ENCODE measurements at regions of chr11 and their contacts with region 1.

Region 1: DNA sequence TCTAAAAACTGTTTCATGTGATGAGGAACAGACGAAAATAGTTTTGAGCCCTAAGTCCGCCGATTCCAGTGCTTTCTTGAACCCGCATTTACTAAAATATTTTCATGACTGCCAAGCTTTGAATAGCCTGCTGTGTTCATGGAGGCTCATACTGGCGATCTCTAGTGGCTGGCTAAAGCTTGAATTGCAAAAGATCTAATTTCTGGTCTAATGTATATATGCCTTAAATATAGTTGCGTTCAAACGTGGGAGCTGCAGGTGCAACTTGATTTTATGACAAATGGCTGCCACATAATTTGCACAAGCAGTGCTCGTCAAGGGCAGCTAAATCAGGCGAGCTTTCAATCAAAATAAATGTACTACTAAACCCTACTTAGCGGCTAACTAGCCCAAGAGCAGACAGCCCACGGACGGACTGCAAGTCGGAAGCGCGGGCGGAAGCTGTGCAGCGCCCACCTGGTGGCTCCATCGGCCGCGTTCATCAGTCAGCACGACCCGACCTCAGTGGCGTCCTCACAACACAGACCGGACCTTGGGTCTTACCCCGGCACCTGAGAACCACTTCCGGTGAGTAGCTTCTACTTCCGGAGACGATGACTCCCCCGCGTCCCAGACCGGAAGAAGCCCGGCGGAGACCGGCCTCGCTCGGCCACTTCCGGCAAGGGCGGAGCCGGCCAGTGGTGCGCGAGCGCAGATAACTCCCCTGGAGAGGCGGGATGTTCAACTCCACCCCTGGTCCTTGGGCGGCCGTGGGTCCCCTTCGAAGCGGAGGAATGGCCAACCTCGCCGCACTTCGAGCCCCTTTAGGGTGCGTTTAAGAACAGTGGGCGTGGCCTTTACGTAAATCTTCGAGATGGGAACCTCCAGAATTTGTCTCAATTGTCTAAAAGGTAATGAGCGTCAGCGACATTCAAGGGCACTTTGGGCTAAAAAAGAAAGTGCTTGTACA is 6.1 kb downstream of the RPL27A start:
- DNase-seq: peak; percentile 96 to 98
- ATAC-seq: peak; percentile 91 to 92
- H3K4me3 ChIP-seq: peak overlapping the region; percentile 59
- H3K27ac ChIP-seq: peak overlapping the region; percentile 85 to 88
- H3K4me1 ChIP-seq: peaks cover 49% of the 10 kb centered on the region
- CTCF ChIP-seq: 0 out of 3 replicates have a peak, but pooled peaks have one; percentile 23
- EP300 ChIP-seq: no peak
- POLR2A ChIP-seq: peak; percentile 83
- RAD21 ChIP-seq: peak; percentile 44 to 70

Region 2: GRCh38 chr11:8699903-8700302 is 11.2 kb after region 1 on chr11:
- CTCF ChIA-PET with region 1: no interaction called
- POLR2A ChIA-PET with region 1: interaction called, 15 read pairs
- DNase-seq: no peak
- ATAC-seq: no peak
- H3K4me3 ChIP-seq: no peak overlapping the region
- H3K27ac ChIP-seq: peak overlapping the region in 1 of 2 experiments; percentile 24; a peak in 1 of 6 replicates
- H3K4me1 ChIP-seq: peaks cover 16% of the 10 kb centered on the region
- CTCF ChIP-seq: no peak
- EP300 ChIP-seq: no peak
- POLR2A ChIP-seq: no peak
- RAD21 ChIP-seq: no peak

Region 3: GRCh38 chr11:8717876-8718753 is 29.4 kb after region 1 on chr11:
- CTCF ChIA-PET with region 1: interaction called, 3 read pairs
- POLR2A ChIA-PET with region 1: interaction called, 13 read pairs
- DNase-seq: peak in 1 of 2 experiments; percentile 56
- ATAC-seq: peak; percentile 12 to 51; a peak in 3 of 6 replicates
- H3K4me3 ChIP-seq: 0 out of 3 replicates have a peak overlapping the region, but pooled peaks have one; percentile 3
- H3K27ac ChIP-seq: peak overlapping the region; percentile 80 to 92
- H3K4me1 ChIP-seq: peaks cover 57% of the 10 kb centered on the region
- CTCF ChIP-seq: no peak
- EP300 ChIP-seq: peak in 1 of 2 experiments; percentile 30; a peak in 2 of 5 replicates
- POLR2A ChIP-seq: no peak
- RAD21 ChIP-seq: peak in 1 of 2 experiments; percentile 23; a peak in 1 of 5 replicates

Region 4: GRCh38 chr11:8768625-8769333 is 80.1 kb after region 1 on chr11:
- CTCF ChIA-PET with region 1: interaction called, 3 read pairs
- POLR2A ChIA-PET with region 1: interaction called, 13 read pairs
- DNase-seq: peak in 1 of 2 experiments; percentile 44
- ATAC-seq: peak; percentile 58 to 65
- H3K4me3 ChIP-seq: no peak overlapping the region
- H3K27ac ChIP-seq: peak overlapping the region; percentile 2 to 53; a peak in 3 of 6 replicates
- H3K4me1 ChIP-seq: peaks cover 24% of the 10 kb centered on the region
- CTCF ChIP-seq: peak; percentile 24; the same call in 1 of the 3 replicates
- EP300 ChIP-seq: no peak
- POLR2A ChIP-seq: no peak
- RAD21 ChIP-seq: peak; percentile 42 to 44; a peak in 4 of 5 replicates

Region 5: DNA sequence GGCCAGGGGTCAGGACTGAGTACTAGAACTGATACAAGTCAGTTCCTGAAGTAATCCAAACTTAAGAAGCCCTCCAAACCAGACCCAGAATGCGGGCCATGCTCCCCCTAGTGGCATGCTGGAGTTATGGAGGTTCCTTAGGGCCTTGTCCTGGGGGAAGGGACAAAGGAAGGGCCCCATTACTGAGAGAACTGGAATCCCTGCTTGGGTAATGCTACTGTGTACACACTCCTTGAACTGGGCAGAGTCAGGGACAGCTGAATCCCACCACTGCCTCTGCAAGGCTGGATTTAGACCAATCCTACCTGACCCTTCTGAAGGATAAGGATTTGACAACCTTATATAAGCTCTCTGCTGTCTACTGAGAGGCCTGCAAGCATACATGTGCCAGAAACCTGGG is 125.0 kb after region 1 on chr11:
- CTCF ChIA-PET with region 1: interaction called, 5 read pairs
- POLR2A ChIA-PET with region 1: interaction called, 16 read pairs
- DNase-seq: peak; percentile 85 to 90
- ATAC-seq: peak; percentile 82 to 96
- H3K4me3 ChIP-seq: no peak overlapping the region
- H3K27ac ChIP-seq: peak overlapping the region in 1 of 2 experiments; percentile 72; a peak in 3 of 6 replicates
- H3K4me1 ChIP-seq: peaks cover 30% of the 10 kb centered on the region
- CTCF ChIP-seq: peak; percentile 73
- EP300 ChIP-seq: no peak
- POLR2A ChIP-seq: no peak
- RAD21 ChIP-seq: peak; percentile 74 to 84

Region 6: DNA sequence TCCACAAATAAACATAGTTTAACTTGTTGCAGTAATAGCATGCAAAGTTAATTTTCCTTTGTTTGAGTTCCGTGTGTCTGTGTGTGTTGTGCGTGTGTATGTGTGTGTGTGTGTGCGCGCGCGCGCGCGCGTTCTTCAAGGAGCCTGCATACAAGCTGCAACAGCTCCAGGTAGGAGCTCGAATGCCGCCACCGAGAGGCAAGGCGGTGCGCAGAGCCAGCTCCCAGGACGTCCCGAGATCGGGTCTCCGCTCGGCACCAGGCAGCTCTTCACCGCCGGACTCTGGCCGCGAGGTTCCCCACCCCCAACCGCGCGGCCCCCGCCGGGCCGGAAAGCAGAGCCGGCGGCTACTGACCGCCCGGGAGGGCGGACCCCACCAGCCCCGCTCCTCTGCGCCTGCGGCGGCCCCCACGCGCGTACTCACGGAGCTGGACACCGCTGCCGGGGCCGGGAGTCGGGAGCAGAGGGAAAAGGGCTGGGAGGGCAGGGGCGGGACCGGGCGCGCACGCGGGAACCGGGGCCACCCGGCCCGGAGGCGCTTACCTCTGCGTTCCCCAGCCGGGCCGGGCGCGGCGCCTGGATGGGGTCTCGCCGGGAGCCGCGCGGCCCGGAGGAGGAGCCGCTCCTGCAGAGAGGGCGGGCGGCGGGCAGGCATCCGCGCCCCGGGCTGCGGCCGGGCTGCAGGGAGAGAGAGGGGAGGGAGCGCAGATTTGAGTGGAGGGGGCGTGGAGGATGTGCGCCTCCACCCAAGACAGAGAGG is 181.9 kb after region 1 on chr11:
- CTCF ChIA-PET with region 1: no interaction called
- POLR2A ChIA-PET with region 1: interaction called, 44 read pairs
- DNase-seq: peak; percentile 58 to 86
- ATAC-seq: peak; percentile 83 to 89
- H3K4me3 ChIP-seq: peak overlapping the region; percentile 94
- H3K27ac ChIP-seq: peak overlapping the region; percentile 95 to 96
- H3K4me1 ChIP-seq: peaks cover 14% of the 10 kb centered on the region; the same call in 2 of the 3 replicates
- CTCF ChIP-seq: no peak; the same call in 2 of the 3 replicates
- EP300 ChIP-seq: no peak
- POLR2A ChIP-seq: peak; percentile 38
- RAD21 ChIP-seq: peak; percentile 10 to 51; a peak in 2 of 5 replicates

Region 7: GRCh38 chr11:8964324-8965320 is 275.9 kb after region 1 on chr11 and contains the start of gene TMEM9B:
- CTCF ChIA-PET with region 1: interaction called, 7 read pairs
- POLR2A ChIA-PET with region 1: interaction called, 20 read pairs
- DNase-seq: peak; percentile 87 to 92
- ATAC-seq: peak; percentile 93 to 94
- H3K4me3 ChIP-seq: peak within 1 kb of the TSS; percentile 78
- H3K27ac ChIP-seq: peak within 1 kb of the TSS; percentile 96
- H3K4me1 ChIP-seq: peaks cover 23% of the 10 kb centered on the region
- CTCF ChIP-seq: no peak
- EP300 ChIP-seq: no peak
- POLR2A ChIP-seq: peak; percentile 65
- RAD21 ChIP-seq: no peak; a peak in 1 of 5 replicates
- polyA plus RNA-seq, gene TMEM9B: 43.4 and 47.3 TPM in 2 replicates

Measured in A549 (cell line).